HepG2 (cell line): ENCODE measurements at regions of chr9 and their contacts with region 1.

Region 1: DNA sequence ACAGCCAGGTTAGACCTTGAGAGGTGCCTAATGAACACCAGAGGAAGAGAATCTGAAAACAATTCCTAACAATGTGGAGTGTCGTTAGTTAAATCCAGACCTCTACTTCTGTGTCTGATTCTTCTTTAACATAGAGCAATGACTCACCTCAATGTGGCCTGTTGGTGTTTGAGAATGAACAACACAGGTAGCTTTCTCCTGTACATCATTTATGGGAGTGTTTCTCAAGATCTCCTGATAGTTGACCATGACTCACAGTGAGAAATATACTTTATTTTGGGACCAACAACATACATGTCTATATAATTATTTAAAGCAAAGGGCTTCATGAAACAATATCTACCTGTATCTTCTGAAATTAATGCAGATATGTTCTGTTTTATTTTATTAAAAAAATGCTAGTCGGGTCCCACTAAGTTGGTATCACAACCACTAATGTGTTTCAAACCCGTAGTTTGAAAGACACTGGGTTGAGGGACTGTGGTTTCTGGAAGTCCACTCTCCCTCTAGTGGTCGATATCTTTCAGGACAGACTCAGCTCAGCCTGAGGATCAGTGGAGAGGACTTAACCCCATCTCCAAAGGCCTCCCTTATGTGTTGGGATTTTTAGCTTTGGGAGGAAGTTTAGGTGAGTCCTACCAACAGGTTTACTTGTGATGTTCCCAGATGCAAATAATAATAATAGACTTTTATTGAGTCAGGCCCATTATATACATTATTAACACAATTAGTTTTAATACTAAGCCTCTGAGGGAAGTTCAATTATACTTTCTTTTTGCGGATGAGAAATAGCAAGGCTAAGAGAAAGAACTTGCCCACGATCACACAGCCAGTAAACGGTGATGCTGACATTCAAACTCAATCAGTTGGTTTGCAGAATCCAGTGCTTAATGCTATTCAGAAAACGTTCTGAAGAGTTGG is 70.0 kb upstream of the KLF9 start:
- DNase-seq: peak; percentile 59
- ATAC-seq: peak; percentile 92
- H3K4me3 ChIP-seq: no peak overlapping the region
- H3K27ac ChIP-seq: no peak overlapping the region
- H3K4me1 ChIP-seq: peaks cover 18% of the 10 kb centered on the region
- H3K27me3 ChIP-seq: peaks cover 0 to 22% of the 10 kb centered on the region in 2 experiments; a peak in 1 of 5 replicates
- CTCF ChIP-seq: peak; percentile 80
- EP300 ChIP-seq: no peak
- POLR2A ChIP-seq: no peak
- RAD21 ChIP-seq: peak; percentile 62

Region 2: DNA sequence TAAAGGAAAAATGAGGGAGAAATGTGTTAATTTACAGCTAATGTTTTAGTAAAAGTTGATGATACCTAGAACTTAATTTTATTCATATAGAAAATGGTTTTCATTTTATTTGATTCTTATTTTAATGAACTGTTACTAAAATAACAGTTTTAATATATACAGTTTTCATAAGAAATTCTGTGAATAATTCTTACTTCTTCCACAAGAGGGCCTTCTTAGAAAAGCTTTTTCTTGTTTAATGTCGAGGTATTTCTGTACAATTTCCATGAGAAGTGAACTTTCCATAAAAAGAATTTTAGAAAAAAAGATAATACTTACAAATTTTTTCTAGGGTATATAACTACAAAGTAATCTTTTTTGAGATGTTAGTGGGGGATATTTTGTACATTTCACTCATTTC is 143.9 kb before region 1 on chr9:
- CTCF ChIA-PET with region 1: interaction called, 9 read pairs
- POLR2A ChIA-PET with region 1: interaction called, 3 read pairs
- in situ Hi-C with region 1: no loop called
- intact Hi-C with region 1: loop called (anchors 1 kb)
- DNase-seq: peak; percentile 3
- ATAC-seq: no peak
- H3K4me3 ChIP-seq: no peak overlapping the region
- H3K27ac ChIP-seq: no peak overlapping the region
- H3K4me1 ChIP-seq: no peaks in the 10 kb centered on the region
- H3K27me3 ChIP-seq: no peaks in the 10 kb centered on the region
- CTCF ChIP-seq: 0 out of 2 replicates have a peak, but pooled peaks have one; percentile 14
- EP300 ChIP-seq: no peak
- POLR2A ChIP-seq: no peak
- RAD21 ChIP-seq: no peak

Region 3: GRCh38 chr9:70413798-70414775 is 70.4 kb before region 1 on chr9 and contains the start of gene KLF9:
- CTCF ChIA-PET with region 1: no interaction called
- POLR2A ChIA-PET with region 1: interaction called, 40 read pairs
- in situ Hi-C with region 1: loop called (anchors 5 kb)
- intact Hi-C with region 1: loop called (anchors 1 kb)
- DNase-seq: peak; percentile 89
- ATAC-seq: peak; percentile 68
- H3K4me3 ChIP-seq: peak within 1 kb of the TSS; percentile 74 to 88 (median 84)
- H3K27ac ChIP-seq: peak within 1 kb of the TSS; percentile 95
- H3K4me1 ChIP-seq: peaks cover 53% of the 10 kb centered on the region
- H3K27me3 ChIP-seq: peaks cover 0 to 9% of the 10 kb centered on the region in 2 experiments; a peak in 2 of 5 replicates
- CTCF ChIP-seq: 0 out of 2 replicates have a peak, but pooled peaks have one; percentile 18
- EP300 ChIP-seq: 0 out of 4 replicates have a peak, but pooled peaks of 1 of the 2 experiments have one; percentile 25
- POLR2A ChIP-seq: peak in 1 of 2 experiments; percentile 88; a peak in 2 of 4 replicates
- RAD21 ChIP-seq: no peak
- total RNA-seq, gene KLF9: 5.7 and 7.2 TPM in 2 replicates

Region 4: GRCh38 chr9:70466976-70467561 is 17.4 kb before region 1 on chr9:
- CTCF ChIA-PET with region 1: no interaction called
- POLR2A ChIA-PET with region 1: interaction called, 11 read pairs
- in situ Hi-C with region 1: no loop called
- intact Hi-C with region 1: no loop called
- DNase-seq: no peak
- ATAC-seq: no peak
- H3K4me3 ChIP-seq: no peak overlapping the region
- H3K27ac ChIP-seq: no peak overlapping the region
- H3K4me1 ChIP-seq: peaks cover 33% of the 10 kb centered on the region
- H3K27me3 ChIP-seq: 0 out of 5 replicates have a peak, but pooled peaks cover 0 to 3% of the 10 kb centered on the region in 2 experiments
- CTCF ChIP-seq: no peak
- EP300 ChIP-seq: no peak
- POLR2A ChIP-seq: no peak
- RAD21 ChIP-seq: no peak